Colonic mucosa (tissue), 4 donors: ENCODE measurements at regions of chr4 and their contacts with region 1.

Region 1: DNA sequence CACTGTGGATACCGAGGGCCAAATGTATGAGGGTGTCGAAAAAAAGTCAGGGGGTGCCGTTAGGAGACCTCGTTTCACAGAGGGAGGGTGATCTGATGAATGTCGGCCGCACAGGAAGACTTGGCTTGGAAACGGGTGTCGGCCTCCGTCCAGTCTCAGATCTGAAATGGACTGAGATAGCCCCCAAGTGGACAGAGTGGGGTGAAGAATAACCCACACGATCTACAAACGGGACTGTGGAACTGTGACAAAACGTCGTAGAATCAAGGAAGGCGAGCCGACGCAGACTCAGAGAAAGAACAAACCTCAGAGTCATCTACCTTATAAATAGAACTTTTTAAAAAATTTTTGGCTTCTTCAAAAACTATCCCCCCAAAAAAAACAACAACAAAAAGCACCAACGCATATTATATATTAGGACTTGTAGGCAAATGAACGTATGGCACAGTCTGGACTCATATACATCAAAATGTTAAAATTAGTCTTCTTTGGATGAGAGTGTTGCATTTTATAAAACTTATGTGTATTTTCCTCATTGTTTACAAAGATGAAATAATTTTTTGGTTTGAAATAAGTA is 63.8 kb upstream of the IRF2 start:
- DNase-seq: peak; percentile 89
- H3K4me3 ChIP-seq: peak overlapping the region; percentile 62
- H3K27ac ChIP-seq: peak overlapping the region; percentile 96
- H3K4me1 ChIP-seq: no peaks in the 10 kb centered on the region
- H3K27me3 ChIP-seq: no peaks in the 10 kb centered on the region
- CTCF ChIP-seq: peak; percentile 60

Region 2: GRCh38 chr4:184263910-184264732 is 274.0 kb before region 1 on chr4:
- intact Hi-C with region 1: loop called (anchors 1 kb)
- DNase-seq: peak; percentile 96
- H3K4me3 ChIP-seq: no peak overlapping the region
- H3K27ac ChIP-seq: no peak overlapping the region
- H3K4me1 ChIP-seq: no peaks in the 10 kb centered on the region
- H3K27me3 ChIP-seq: no peaks in the 10 kb centered on the region
- CTCF ChIP-seq: peak; percentile 94

Region 3: GRCh38 chr4:184287697-184288255 is 250.3 kb before region 1 on chr4:
- intact Hi-C with region 1: loop called (anchors 5 kb)
- DNase-seq: peak; percentile 63
- H3K4me3 ChIP-seq: no peak overlapping the region
- H3K27ac ChIP-seq: peak overlapping the region; percentile 38
- H3K4me1 ChIP-seq: peaks cover 6% of the 10 kb centered on the region
- H3K27me3 ChIP-seq: no peaks in the 10 kb centered on the region
- CTCF ChIP-seq: peak; percentile 34

Region 4: GRCh38 chr4:184384056-184384809 is 153.9 kb before region 1 on chr4:
- intact Hi-C with region 1: loop called (anchors 5 kb)
- DNase-seq: peak; percentile 63
- H3K4me3 ChIP-seq: no peak overlapping the region
- H3K27ac ChIP-seq: peak overlapping the region; percentile 92
- H3K4me1 ChIP-seq: peaks cover 28% of the 10 kb centered on the region
- H3K27me3 ChIP-seq: no peaks in the 10 kb centered on the region
- CTCF ChIP-seq: no peak

Region 5: DNA sequence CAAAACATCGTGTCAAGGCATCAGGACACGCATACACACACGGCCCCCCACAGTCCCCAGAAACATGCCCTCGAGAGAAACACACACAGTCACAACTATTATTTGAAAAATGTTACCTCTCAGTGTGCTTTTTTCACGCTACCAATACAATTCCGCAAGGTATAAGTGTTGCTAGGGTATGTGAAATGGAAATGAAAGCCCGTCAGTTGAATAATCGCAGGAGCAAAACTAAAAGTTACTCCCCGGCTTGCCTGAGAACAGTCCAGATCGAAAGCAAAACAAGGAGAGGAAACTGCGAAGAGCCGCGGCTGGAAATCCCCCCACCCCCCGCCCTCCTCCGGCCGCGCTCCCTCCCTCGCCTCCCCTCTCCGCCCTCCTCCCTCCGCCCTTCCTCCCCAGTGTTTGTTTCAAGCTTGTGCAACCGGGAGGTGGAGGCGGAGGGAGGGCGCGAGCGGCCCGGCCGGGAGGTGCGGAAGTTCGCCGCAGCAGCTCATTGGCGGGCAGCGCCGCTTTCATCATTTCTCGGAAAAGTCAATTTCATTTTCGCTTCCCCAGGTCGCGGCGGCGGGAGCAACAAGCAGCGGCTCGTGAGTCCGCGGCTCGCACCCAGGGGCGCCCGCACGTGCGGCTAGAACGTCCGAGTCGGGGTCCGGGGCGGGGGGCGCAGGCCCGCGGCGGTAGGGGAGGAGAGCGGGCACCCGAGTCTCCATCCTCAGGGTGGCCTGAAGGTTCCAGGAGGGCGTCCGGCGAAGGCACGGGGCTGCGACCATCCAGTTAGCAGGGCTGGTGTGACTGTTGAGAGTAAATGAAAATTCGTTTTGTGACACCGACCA is 63.6 kb before region 1 on chr4 and contains the start of gene IRF2:
- intact Hi-C with region 1: loop called (anchors 2 kb)
- DNase-seq: peak; percentile 97
- H3K4me3 ChIP-seq: peak within 1 kb of the TSS; percentile 68
- H3K27ac ChIP-seq: peak within 1 kb of the TSS; percentile 97
- H3K4me1 ChIP-seq: no peaks in the 10 kb centered on the region
- H3K27me3 ChIP-seq: no peaks in the 10 kb centered on the region
- CTCF ChIP-seq: no peak
- total RNA-seq, gene IRF2: 36.2 to 61.9 TPM

Region 6: GRCh38 chr4:184649026-184649970 is 111.2 kb after region 1 on chr4 and contains the starts of genes CASP3 and PRIMPOL:
- intact Hi-C with region 1: no loop called
- DNase-seq: peak; percentile 98
- H3K4me3 ChIP-seq: peak within 1 kb of the TSS; percentile 85
- H3K27ac ChIP-seq: peak within 1 kb of the TSS; percentile 99
- H3K4me1 ChIP-seq: peaks cover 7% of the 10 kb centered on the region
- H3K27me3 ChIP-seq: no peaks in the 10 kb centered on the region
- CTCF ChIP-seq: no peak
- total RNA-seq, gene CASP3: 45.4 to 57.9 TPM
- total RNA-seq, gene PRIMPOL: 16.0 to 21.6 TPM

Region 7: DNA sequence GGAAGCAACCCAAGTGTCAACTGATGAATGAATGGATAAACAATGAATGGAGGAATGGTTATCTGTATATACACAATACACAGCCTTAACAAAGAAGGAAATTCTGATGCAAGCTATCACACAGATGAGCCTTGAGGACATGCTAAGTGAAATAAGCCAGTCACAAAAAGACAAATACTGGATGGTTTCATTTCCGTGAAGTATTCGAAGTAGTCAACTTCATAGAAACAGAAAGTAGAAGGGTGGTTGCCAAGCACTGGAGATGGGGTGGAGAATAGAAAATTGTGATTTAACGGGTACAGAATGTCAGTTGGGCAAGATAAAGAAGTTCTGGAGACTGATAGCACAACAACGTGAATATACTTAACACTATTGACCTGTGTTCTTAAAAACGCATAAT is 167.6 kb after region 1 on chr4:
- intact Hi-C with region 1: no loop called
- DNase-seq: no peak
- H3K4me3 ChIP-seq: no peak overlapping the region
- H3K27ac ChIP-seq: no peak overlapping the region
- H3K4me1 ChIP-seq: no peaks in the 10 kb centered on the region
- H3K27me3 ChIP-seq: no peaks in the 10 kb centered on the region
- CTCF ChIP-seq: no peak